Activated T-helper 2 cell treated with anti-CD3 and anti-CD28 coated beads, Interferon-gamma antibody, Interleukin-2, Interleukin-4, amounts not matched to agents 10 μg/mL and 5 μg/mL and 100 μg/mL, durations not matched to agents 14 hours and 24 hours and 36 hours (primary cell): ENCODE measurements at regions of chrX and their contacts with region 1.

Region 1: DNA sequence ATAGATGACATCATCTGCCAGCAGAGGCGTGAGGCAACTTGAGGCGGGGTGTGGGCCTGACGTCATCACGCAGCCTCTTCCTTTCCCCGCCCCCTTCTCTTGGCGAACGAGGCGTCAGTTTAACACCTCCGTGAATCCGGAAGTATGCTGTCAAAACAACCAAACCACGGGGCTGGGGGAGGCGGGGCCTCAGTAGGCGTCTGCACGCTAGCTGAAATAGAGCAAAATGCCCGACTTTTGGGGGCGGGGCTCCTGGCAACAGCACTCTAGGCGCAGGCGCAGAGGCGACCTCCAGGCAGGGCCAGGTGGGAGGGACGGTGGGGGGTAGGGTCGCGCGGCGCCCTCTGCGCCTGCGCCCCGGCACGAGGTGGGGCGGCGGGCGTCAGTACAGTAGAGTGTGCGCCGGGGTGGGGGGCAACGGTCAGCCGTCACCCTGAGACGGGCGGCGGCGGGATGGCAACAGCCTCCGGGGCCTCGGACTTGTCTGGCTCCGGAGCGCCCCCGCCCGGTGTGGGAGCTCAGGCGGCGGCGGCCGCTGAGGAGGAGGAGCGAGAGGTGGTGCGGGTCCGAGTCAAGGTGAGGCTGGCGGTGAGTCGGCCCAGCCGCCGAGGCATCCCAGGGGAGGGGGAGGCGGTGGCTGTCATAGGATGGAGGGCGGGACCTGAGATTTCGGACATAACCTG is at the start of gene TBC1D25:
- DNase-seq: peak; percentile 95
- H3K4me3 Mint-ChIP-seq: peak within 1 kb of the TSS; percentile 89
- H3K27ac Mint-ChIP-seq: peak within 1 kb of the TSS; percentile 94
- H3K4me1 Mint-ChIP-seq: peaks cover 17% of the 10 kb centered on the region
- H3K27me3 Mint-ChIP-seq: no peaks in the 10 kb centered on the region
- total RNA-seq, gene TBC1D25: 16.0 and 18.3 TPM in 2 replicates

Region 2: DNA sequence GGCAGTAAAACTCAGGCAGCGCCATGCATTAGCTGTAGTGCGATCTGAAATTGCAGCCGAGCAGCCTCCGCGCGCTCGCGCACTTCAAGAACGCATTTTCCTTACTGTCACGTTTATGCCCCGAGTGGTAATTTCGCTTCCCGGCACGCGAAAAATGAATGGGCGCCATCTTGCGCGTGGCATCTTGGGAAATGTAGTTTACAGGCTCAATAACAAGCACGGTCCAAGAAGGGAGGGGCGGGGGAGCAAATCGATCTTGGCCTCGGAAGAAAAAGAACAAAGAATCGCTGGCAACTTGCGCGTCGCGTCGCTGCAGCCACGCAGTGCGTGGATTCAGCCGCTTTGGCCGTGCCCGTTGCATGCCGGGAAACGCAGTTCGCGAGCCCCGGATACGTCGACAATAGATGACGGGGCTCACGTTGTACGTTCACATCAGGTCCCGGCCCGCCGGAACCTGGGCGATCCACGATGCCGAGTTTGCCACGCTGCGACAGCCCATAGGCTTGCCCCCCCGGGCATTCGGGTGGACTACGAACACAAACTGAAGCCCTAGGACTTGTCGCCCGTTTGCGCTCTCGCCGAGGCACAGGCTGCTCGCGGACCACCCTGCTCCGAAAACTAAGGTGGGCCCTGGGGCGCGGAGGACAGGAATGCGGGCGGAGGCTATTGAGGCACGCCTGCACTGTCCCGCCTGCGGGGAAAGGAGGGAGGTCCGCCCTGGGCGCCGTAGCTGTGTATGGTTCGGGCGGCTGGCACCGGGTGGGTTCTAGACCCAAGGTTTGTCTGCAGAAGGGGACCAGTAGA is 63.5 kb before region 1 on chrX and contains the start of gene FTSJ1:
- intact Hi-C with region 1: loop called (anchors 5 kb)
- DNase-seq: peak; percentile 88
- H3K4me3 Mint-ChIP-seq: peak within 1 kb of the TSS; percentile 98
- H3K27ac Mint-ChIP-seq: peak within 1 kb of the TSS; percentile 95
- H3K4me1 Mint-ChIP-seq: peaks cover 32% of the 10 kb centered on the region
- H3K27me3 Mint-ChIP-seq: no peaks in the 10 kb centered on the region
- total RNA-seq, gene FTSJ1: 84.6 and 89.8 TPM in 2 replicates

Region 3: DNA sequence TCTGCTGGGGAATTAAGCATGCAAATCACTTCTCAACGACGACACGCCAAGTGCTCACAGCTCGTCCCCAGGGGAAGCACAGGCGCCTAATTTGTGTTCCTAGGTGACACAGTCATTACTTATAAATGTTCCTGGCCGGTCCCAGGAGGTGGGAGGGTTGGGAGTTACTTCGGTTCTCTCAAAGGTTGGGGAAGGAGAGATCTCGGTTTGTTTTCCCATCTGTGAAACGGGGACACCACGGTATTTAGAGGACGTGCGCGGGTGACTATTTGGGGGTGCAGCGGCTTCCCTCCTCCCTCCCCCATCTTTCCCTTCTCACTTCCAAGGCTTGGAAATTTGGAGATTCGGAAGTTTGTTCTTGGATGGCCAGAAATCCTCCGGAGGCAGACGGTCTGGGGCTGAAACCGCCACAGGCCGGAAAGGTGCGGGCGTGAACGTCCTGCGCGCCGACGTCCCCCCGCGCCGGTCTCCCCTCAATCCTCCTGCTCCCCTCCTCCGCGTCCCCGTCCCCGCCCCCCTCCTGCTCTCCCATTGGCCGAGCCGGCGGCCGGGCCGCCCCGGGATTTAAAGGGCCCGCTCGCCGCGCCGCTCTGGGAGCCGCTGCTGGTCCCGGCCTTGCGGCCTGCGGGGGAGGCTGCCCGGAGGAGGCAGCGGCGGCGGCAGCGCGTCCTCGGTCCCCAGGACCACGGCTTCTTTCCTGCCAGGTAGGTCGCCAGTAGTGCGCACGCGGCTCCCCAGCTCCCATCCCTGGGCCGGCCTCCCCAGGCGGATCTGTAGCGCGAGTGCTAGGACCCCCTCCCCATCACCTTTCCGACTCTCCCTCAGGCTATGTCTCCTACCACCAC is 30.9 kb before region 1 on chrX and contains the start of gene PORCN:
- intact Hi-C with region 1: loop called (anchors 1 kb)
- DNase-seq: peak; percentile 71
- H3K4me3 Mint-ChIP-seq: peak within 1 kb of the TSS; percentile 93
- H3K27ac Mint-ChIP-seq: peak within 1 kb of the TSS; percentile 87
- H3K4me1 Mint-ChIP-seq: peaks cover 22% of the 10 kb centered on the region
- H3K27me3 Mint-ChIP-seq: no peaks in the 10 kb centered on the region
- total RNA-seq, gene PORCN: 16.5 and 17.7 TPM in 2 replicates

Region 4: GRCh38 chrX:48574270-48575266 is 35.1 kb after region 1 on chrX and contains the start of gene RBM3:
- intact Hi-C with region 1: loop called (anchors 1 kb)
- DNase-seq: peak; percentile 89
- H3K4me3 Mint-ChIP-seq: peak within 1 kb of the TSS; percentile 99
- H3K27ac Mint-ChIP-seq: peak within 1 kb of the TSS; percentile 100
- H3K4me1 Mint-ChIP-seq: peaks cover 17% of the 10 kb centered on the region
- H3K27me3 Mint-ChIP-seq: no peaks in the 10 kb centered on the region
- total RNA-seq, gene RBM3: 345 and 346 TPM in 2 replicates